HEK293 (cell line): ENCODE measurements at regions of chr20 and their contacts with region 1.

Region 1: DNA sequence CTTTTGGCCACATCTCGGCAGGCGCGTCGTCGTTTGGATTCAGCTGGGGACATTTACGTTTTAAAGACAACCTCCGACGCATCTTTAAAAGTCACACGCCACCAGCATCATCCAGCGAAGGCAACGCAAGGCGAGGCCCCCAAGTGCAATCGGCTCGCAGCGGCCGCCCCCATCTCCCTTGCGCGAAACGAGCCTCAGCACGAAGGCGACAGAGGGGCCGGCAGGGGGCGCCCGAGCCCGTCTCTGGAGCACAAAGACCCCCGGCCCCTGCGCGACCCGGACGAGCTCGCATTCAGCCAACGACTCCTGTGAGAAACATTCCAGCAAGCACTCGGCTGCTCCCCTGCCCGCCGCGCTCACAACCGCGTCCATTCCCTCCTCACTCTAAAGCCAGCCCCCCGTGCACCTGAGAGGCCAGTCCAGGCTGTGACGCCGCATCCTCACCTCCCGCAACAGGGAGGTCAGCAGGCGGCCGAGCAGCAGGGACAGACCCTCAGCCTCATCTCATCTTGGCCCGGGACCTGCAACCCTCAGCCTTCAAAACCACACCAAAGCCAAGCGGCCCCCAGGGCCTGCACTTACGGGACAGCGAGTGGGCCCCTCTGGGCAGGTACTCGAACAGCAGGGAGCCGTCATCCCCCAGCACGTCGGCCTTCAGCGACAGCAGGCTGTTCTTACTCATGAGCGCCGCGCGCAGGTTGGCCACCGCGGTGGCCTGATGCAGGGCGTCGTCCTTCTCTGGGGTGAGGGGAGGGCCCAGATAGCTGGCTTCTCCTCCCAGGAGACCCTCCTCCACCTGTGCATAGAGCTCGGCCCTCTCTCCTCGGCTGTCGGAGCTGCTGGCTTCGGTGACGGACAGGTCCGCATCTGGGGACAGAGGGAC is 35.8 kb downstream of the SLC2A4RG start:
- H3K4me3 ChIP-seq: no peak overlapping the region
- H3K27ac ChIP-seq: no peak overlapping the region
- H3K4me1 ChIP-seq: no peaks in the 10 kb centered on the region
- CTCF ChIP-seq: peak; percentile 53; the same call in 1 of the 2 replicates

Region 2: GRCh38 chr20:63756648-63756991 is 18.7 kb before region 1 on chr20:
- CTCF ChIA-PET with region 1: interaction called, 15 read pairs
- POLR2A ChIA-PET with region 1: interaction called, 3 read pairs
- H3K4me3 ChIP-seq: no peak overlapping the region
- H3K27ac ChIP-seq: no peak overlapping the region
- H3K4me1 ChIP-seq: no peaks in the 10 kb centered on the region
- CTCF ChIP-seq: no peak

Region 3: DNA sequence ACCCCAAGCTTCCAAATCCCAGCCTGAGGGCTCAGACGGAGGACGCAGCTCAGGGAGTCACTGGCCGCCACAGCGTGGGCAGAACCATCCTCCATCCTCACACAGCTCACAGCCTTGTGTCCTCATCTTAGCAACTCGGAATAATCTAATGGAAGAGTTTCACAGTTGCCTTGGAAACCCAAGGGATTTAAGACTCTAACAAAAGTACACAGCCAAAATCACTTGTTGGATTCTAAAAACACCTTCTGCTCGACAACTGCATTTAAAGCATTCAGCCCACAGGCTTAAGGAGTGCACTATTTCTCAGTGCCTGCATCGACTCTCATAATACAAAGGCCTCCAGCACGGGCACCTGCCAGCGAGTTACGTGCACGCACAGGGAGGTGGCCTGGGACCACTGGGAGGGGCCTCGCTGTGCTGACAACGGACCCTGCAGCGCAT is 10.4 kb after region 1 on chr20:
- CTCF ChIA-PET with region 1: interaction called, 29 read pairs
- POLR2A ChIA-PET with region 1: no interaction called
- H3K4me3 ChIP-seq: no peak overlapping the region
- H3K27ac ChIP-seq: no peak overlapping the region
- H3K4me1 ChIP-seq: no peaks in the 10 kb centered on the region
- CTCF ChIP-seq: no peak

Region 4: DNA sequence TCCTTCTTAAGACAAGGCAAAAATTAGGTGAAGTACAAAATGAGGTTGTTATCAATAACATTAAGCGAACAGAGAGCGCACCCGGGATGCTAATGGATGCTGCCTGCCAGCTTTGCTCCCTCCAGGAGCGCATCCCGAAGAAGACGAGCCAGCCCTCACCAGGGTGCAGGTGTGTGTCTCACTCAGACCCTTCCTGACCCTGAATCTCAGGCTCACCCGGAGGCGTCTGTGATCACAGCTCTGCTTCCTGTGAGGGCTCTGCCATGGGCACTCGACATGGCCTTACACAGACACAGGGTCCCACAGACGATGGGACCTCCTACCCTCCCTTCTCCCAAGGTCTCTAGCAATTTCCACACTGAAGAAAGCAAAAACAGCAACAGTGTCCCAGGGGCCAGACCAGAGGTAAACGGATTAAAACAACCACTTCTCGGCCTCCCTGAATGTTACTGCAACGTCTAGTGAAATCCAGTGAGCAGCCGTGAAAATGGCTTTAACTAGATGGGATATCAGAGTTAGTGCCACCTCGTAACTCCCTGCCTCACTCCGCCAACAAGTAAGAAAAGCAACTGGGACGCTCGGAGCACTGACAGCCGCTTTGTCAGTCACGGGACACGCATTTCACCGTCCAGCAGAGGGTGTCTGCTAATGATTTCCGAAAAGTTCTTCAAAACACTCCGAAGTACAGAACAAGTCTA is 44.0 kb after region 1 on chr20:
- CTCF ChIA-PET with region 1: no interaction called
- POLR2A ChIA-PET with region 1: no interaction called
- H3K4me3 ChIP-seq: no peak overlapping the region
- H3K27ac ChIP-seq: no peak overlapping the region
- H3K4me1 ChIP-seq: no peaks in the 10 kb centered on the region
- CTCF ChIP-seq: no peak